ENCODE measurements at regions of chr19 and their contacts with region 1.

Region 1: GRCh38 chr19:10653715-10654492 is at the start of gene ILF3:
- DNase-seq: peak; percentile 97 to 100 (median 100)
- ATAC-seq: peak; percentile 89
- H3K4me3 ChIP-seq: peak within 1 kb of the TSS; percentile 87
- H3K4me3 Mint-ChIP-seq: peak within 1 kb of the TSS; percentile 93 to 98 (median 95)
- H3K27ac ChIP-seq: peak within 1 kb of the TSS; percentile 100
- H3K27ac Mint-ChIP-seq: peak within 1 kb of the TSS; percentile 94 to 99 (median 98)
- H3K4me1 ChIP-seq: peaks cover 32 to 38% of the 10 kb centered on the region in 2 donors
- H3K4me1 Mint-ChIP-seq: peaks cover 17 to 61% (median 42%) of the 10 kb centered on the region in 7 donors
- H3K27me3 ChIP-seq: no peaks in the 10 kb centered on the region
- H3K27me3 Mint-ChIP-seq: peaks cover 0 to 3% (median 0%) of the 10 kb centered on the region in 5 donors
- total RNA-seq, gene ILF3: 346 to 515 (median 368) TPM

Region 2: GRCh38 chr19:10085641-10086590 is 568.0 kb before region 1 on chr19 and contains the start of gene SHFL:
- CTCF ChIA-PET with region 1: no interaction called
- POLR2A ChIA-PET with region 1: no interaction called
- intact Hi-C with region 1: loop called in 1 of 2 experiments (anchors 10 kb)
- DNase-seq: peak; percentile 71 to 90 (median 83)
- ATAC-seq: peak; percentile 98
- H3K4me3 ChIP-seq: peak within 1 kb of the TSS; percentile 94
- H3K4me3 Mint-ChIP-seq: peak within 1 kb of the TSS; percentile 75 to 92 (median 90)
- H3K27ac ChIP-seq: peak within 1 kb of the TSS; percentile 90
- H3K27ac Mint-ChIP-seq: peak within 1 kb of the TSS; percentile 81 to 92 (median 88)
- H3K4me1 ChIP-seq: peaks cover 4 to 9% of the 10 kb centered on the region in 2 donors
- H3K4me1 Mint-ChIP-seq: peaks cover 8 to 21% (median 8%) of the 10 kb centered on the region in 7 donors
- H3K27me3 ChIP-seq: no peaks in the 10 kb centered on the region
- H3K27me3 Mint-ChIP-seq: no peaks in the 10 kb centered on the region
- total RNA-seq, gene SHFL: 67.8 to 112 (median 102) TPM

Region 3: DNA sequence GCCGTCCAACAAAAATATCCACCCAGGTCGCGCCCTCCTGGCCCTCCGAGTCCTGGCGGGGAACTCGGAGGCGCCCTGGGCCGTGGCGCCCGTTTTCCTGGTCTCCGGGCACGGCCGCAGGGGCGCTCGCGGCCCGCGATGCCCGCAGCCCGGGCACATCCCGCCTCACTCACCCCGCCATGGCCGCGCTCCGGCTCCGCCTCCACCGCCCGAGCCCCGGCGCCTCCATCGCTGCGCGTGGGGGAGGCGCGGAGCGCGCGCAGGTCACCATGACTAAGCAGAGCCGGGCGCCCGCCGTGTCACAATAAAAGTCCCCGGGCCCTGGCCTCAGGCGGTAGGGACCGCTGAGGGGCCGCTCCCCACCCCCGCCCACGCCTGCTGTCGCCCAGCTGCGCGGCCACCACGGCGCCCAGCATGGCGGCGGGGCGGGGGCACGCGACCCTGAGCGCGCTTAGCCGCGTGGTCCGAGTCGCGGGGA is 151.3 kb before region 1 on chr19:
- CTCF ChIA-PET with region 1: no interaction called
- POLR2A ChIA-PET with region 1: interaction called, 4 read pairs
- intact Hi-C with region 1: loop called (anchors 2 kb)
- DNase-seq: peak; percentile 71 to 95 (median 81)
- ATAC-seq: peak; percentile 94
- H3K4me3 ChIP-seq: peak overlapping the region; percentile 88
- H3K4me3 Mint-ChIP-seq: peak overlapping the region; percentile 72 to 96 (median 86)
- H3K27ac ChIP-seq: peak overlapping the region; percentile 83
- H3K27ac Mint-ChIP-seq: peak overlapping the region in 8 of 9 donors; percentile 69 to 91 (median 78)
- H3K4me1 ChIP-seq: peaks cover under 1 to 8% of the 10 kb centered on the region in 2 donors
- H3K4me1 Mint-ChIP-seq: peaks cover 22 to 42% (median 36%) of the 10 kb centered on the region in 7 donors
- H3K27me3 ChIP-seq: no peaks in the 10 kb centered on the region
- H3K27me3 Mint-ChIP-seq: peaks cover 0 to 3% (median 0%) of the 10 kb centered on the region in 5 donors

Region 4: GRCh38 chr19:10695401-10696398 is 41.8 kb after region 1 on chr19:
- CTCF ChIA-PET with region 1: interaction called, 4 read pairs
- POLR2A ChIA-PET with region 1: interaction called, 6 read pairs
- intact Hi-C with region 1: loop called (anchors 1 kb)
- DNase-seq: peak; percentile 79 to 90 (median 85)
- ATAC-seq: peak; percentile 99
- H3K4me3 ChIP-seq: peak overlapping the region; percentile 36
- H3K4me3 Mint-ChIP-seq: peak overlapping the region; percentile 81 to 89 (median 86)
- H3K27ac ChIP-seq: no peak overlapping the region
- H3K27ac Mint-ChIP-seq: peak overlapping the region in 8 of 9 donors; percentile 9 to 88 (median 56)
- H3K4me1 ChIP-seq: peaks cover 4 to 10% of the 10 kb centered on the region in 2 donors
- H3K4me1 Mint-ChIP-seq: peaks cover 12 to 25% (median 21%) of the 10 kb centered on the region in 7 donors
- H3K27me3 ChIP-seq: no peaks in the 10 kb centered on the region
- H3K27me3 Mint-ChIP-seq: peaks cover 0 to 11% (median 0%) of the 10 kb centered on the region in 5 donors

Region 5: DNA sequence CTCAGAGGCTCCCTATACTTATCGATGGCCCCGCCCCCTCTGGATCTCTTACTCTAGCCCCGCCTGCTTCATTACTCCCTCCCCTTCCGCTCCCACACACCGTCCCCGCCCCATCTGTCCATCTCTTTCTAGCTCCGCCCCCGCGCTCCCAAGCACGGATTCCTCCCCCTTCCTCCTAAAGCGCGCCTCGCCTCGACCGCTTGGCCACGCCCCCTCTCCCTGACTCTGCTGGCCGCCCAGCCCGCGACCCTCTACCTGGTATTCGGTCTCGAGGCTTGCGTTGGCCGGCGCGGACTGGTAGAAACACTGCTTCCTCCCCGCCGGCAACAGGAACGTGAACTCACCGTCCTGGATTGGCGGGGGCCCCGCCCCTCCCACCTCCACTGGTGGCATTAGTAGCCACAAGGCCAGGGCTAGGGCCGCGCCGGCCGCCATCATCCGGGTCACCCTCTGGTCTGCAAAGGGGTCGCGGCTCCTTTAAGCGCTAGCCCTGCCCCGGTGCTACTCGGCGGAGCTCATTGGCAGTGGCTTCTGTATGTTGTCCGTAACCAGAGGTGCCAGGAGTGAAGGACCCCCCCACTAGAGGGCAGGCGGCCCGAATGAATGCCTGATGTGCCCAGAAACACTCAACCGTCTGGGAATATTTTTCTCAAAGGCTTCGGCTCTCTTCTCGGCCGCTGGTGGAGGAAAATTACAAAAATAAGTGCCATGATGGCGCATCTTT is 182.0 kb after region 1 on chr19 and contains the start of gene TMED1:
- CTCF ChIA-PET with region 1: no interaction called
- POLR2A ChIA-PET with region 1: no interaction called
- intact Hi-C with region 1: loop called (anchors 1 kb)
- DNase-seq: peak; percentile 81 to 97 (median 93)
- ATAC-seq: peak; percentile 92
- H3K4me3 ChIP-seq: peak within 1 kb of the TSS; percentile 98
- H3K4me3 Mint-ChIP-seq: peak within 1 kb of the TSS; percentile 82 to 99 (median 96)
- H3K27ac ChIP-seq: peak within 1 kb of the TSS; percentile 93
- H3K27ac Mint-ChIP-seq: peak within 1 kb of the TSS; percentile 98 to 100 (median 99)
- H3K4me1 ChIP-seq: peaks cover 8 to 13% of the 10 kb centered on the region in 2 donors
- H3K4me1 Mint-ChIP-seq: peaks cover 12 to 20% (median 15%) of the 10 kb centered on the region in 7 donors
- H3K27me3 ChIP-seq: no peaks in the 10 kb centered on the region
- H3K27me3 Mint-ChIP-seq: no peaks in the 10 kb centered on the region
- total RNA-seq, gene TMED1: 7.6 to 12.8 (median 9.9) TPM

Region 6: GRCh38 chr19:11090054-11090900 is 436.4 kb after region 1 on chr19:
- CTCF ChIA-PET with region 1: no interaction called
- POLR2A ChIA-PET with region 1: no interaction called
- intact Hi-C with region 1: loop called in 1 of 2 experiments (anchors 10 kb)
- DNase-seq: peak; percentile 89 to 97 (median 96)
- ATAC-seq: peak; percentile 90
- H3K4me3 ChIP-seq: peak overlapping the region; percentile 83
- H3K4me3 Mint-ChIP-seq: peak overlapping the region; percentile 85 to 94 (median 89)
- H3K27ac ChIP-seq: peak overlapping the region; percentile 91
- H3K27ac Mint-ChIP-seq: peak overlapping the region; percentile 88 to 99 (median 96)
- H3K4me1 ChIP-seq: peaks cover 24 to 41% of the 10 kb centered on the region in 2 donors
- H3K4me1 Mint-ChIP-seq: peaks cover 13 to 51% (median 44%) of the 10 kb centered on the region in 7 donors
- H3K27me3 ChIP-seq: no peaks in the 10 kb centered on the region
- H3K27me3 Mint-ChIP-seq: peaks cover 0 to 2% (median 0%) of the 10 kb centered on the region in 5 donors

Region 7: GRCh38 chr19:11399667-11400066 is 745.8 kb after region 1 on chr19:
- CTCF ChIA-PET with region 1: no interaction called
- POLR2A ChIA-PET with region 1: no interaction called
- intact Hi-C with region 1: no loop called
- DNase-seq: no peak
- ATAC-seq: no peak
- H3K4me3 ChIP-seq: no peak overlapping the region
- H3K4me3 Mint-ChIP-seq: no peak overlapping the region
- H3K27ac ChIP-seq: no peak overlapping the region
- H3K27ac Mint-ChIP-seq: no peak overlapping the region
- H3K4me1 ChIP-seq: no peaks in the 10 kb centered on the region
- H3K4me1 Mint-ChIP-seq: peaks cover 0 to 6% (median 0%) of the 10 kb centered on the region in 7 donors
- H3K27me3 ChIP-seq: no peaks in the 10 kb centered on the region
- H3K27me3 Mint-ChIP-seq: peaks cover 0 to 10% (median 4%) of the 10 kb centered on the region in 5 donors